CD8-positive, alpha-beta T cell (primary cell): ENCODE measurements at regions of chr3 and their contacts with region 1.

Region 1: DNA sequence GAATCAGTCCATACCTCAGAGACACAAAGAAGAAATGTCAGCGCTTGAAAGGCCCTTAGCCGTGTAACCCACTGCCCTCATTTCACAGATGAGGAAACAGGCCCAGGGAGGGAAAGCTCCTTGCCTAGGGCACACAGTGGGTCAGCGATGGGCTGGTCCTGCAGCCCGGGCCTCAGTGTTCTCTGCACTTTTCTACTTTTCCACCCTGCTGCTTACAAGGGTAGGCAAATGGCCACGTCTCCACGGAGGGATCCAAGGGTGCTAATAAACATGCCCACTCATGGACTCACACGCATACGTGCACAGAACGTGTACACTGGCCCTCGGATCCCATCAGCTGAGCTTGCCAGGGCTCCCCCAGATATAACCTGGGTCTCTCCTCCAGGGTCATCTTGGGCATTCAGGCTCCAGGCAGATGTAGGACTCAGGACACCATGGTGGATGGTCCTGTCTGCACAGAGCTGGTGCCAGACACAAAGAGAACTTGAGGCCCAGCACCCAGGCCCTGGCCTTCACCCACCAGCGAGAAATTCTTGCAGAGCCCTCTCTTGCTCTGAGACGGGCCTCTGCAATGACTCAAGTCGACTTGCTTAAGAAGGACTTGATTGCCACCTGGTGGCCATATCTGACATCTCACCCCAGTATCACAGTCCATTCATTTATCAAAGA is 34.5 kb upstream of the VPS8 start:
- DNase-seq: peak; percentile 63 to 91 (median 84)
- ATAC-seq: peak; percentile 98
- H3K4me3 ChIP-seq: no peak overlapping the region
- H3K4me3 Mint-ChIP-seq: no peak overlapping the region
- H3K27ac ChIP-seq: no peak overlapping the region
- H3K27ac Mint-ChIP-seq: no peak overlapping the region
- H3K4me1 ChIP-seq: no peaks in the 10 kb centered on the region
- H3K4me1 Mint-ChIP-seq: no peaks in the 10 kb centered on the region
- H3K27me3 ChIP-seq: peaks cover 0 to 2% of the 10 kb centered on the region in 2 experiments
- H3K27me3 Mint-ChIP-seq: peaks cover 22% of the 10 kb centered on the region
- CTCF ChIP-seq: peak; percentile 94

Region 2: GRCh38 chr3:184371570-184372018 is 405.9 kb before region 1 on chr3:
- CTCF ChIA-PET with region 1: interaction called, 9 read pairs
- POLR2A ChIA-PET with region 1: no interaction called
- intact Hi-C with region 1: loop called in 1 of 2 experiments (anchors 2 kb)
- DNase-seq: peak; percentile 29 to 74 (median 54)
- ATAC-seq: peak; percentile 99
- H3K4me3 ChIP-seq: no peak overlapping the region
- H3K4me3 Mint-ChIP-seq: no peak overlapping the region
- H3K27ac ChIP-seq: no peak overlapping the region
- H3K27ac Mint-ChIP-seq: no peak overlapping the region
- H3K4me1 ChIP-seq: no peaks in the 10 kb centered on the region
- H3K4me1 Mint-ChIP-seq: peaks cover 4% of the 10 kb centered on the region
- H3K27me3 ChIP-seq: no peaks in the 10 kb centered on the region
- H3K27me3 Mint-ChIP-seq: peaks cover 2% of the 10 kb centered on the region
- CTCF ChIP-seq: peak; percentile 74

Region 3: GRCh38 chr3:184417619-184418327 is 359.7 kb before region 1 on chr3:
- CTCF ChIA-PET with region 1: interaction called, 3 read pairs
- POLR2A ChIA-PET with region 1: no interaction called
- intact Hi-C with region 1: loop called in 1 of 2 experiments (anchors 1 kb)
- DNase-seq: peak; percentile 31 to 80 (median 72)
- ATAC-seq: peak; percentile 97
- H3K4me3 ChIP-seq: no peak overlapping the region
- H3K4me3 Mint-ChIP-seq: no peak overlapping the region
- H3K27ac ChIP-seq: no peak overlapping the region
- H3K27ac Mint-ChIP-seq: no peak overlapping the region
- H3K4me1 ChIP-seq: no peaks in the 10 kb centered on the region
- H3K4me1 Mint-ChIP-seq: no peaks in the 10 kb centered on the region
- H3K27me3 ChIP-seq: no peaks in the 10 kb centered on the region
- H3K27me3 Mint-ChIP-seq: peaks cover 1% of the 10 kb centered on the region
- CTCF ChIP-seq: peak; percentile 68

Region 4: GRCh38 chr3:184549793-184550577 is 227.5 kb before region 1 on chr3:
- CTCF ChIA-PET with region 1: interaction called, 10 read pairs
- POLR2A ChIA-PET with region 1: no interaction called
- intact Hi-C with region 1: no loop called
- DNase-seq: no peak
- ATAC-seq: no peak
- H3K4me3 ChIP-seq: no peak overlapping the region
- H3K4me3 Mint-ChIP-seq: no peak overlapping the region
- H3K27ac ChIP-seq: no peak overlapping the region
- H3K27ac Mint-ChIP-seq: no peak overlapping the region
- H3K4me1 ChIP-seq: peaks cover 17% of the 10 kb centered on the region
- H3K4me1 Mint-ChIP-seq: peaks cover 11% of the 10 kb centered on the region
- H3K27me3 ChIP-seq: peaks cover 0 to 2% of the 10 kb centered on the region in 2 experiments
- H3K27me3 Mint-ChIP-seq: peaks cover 19% of the 10 kb centered on the region
- CTCF ChIP-seq: no peak

Region 5: GRCh38 chr3:184568924-184569829 is 208.3 kb before region 1 on chr3:
- CTCF ChIA-PET with region 1: interaction called, 12 read pairs
- POLR2A ChIA-PET with region 1: no interaction called
- intact Hi-C with region 1: no loop called
- DNase-seq: peak in 2 of 9 experiments; percentile 18 to 24
- ATAC-seq: peak; percentile 38
- H3K4me3 ChIP-seq: peak overlapping the region in 1 of 2 experiments; percentile 37
- H3K4me3 Mint-ChIP-seq: peak overlapping the region; percentile 42
- H3K27ac ChIP-seq: no peak overlapping the region
- H3K27ac Mint-ChIP-seq: no peak overlapping the region
- H3K4me1 ChIP-seq: peaks cover 5% of the 10 kb centered on the region
- H3K4me1 Mint-ChIP-seq: peaks cover 7% of the 10 kb centered on the region
- H3K27me3 ChIP-seq: peaks cover 6 to 19% of the 10 kb centered on the region in 2 experiments
- H3K27me3 Mint-ChIP-seq: peaks cover 38% of the 10 kb centered on the region
- CTCF ChIP-seq: no peak

Region 6: DNA sequence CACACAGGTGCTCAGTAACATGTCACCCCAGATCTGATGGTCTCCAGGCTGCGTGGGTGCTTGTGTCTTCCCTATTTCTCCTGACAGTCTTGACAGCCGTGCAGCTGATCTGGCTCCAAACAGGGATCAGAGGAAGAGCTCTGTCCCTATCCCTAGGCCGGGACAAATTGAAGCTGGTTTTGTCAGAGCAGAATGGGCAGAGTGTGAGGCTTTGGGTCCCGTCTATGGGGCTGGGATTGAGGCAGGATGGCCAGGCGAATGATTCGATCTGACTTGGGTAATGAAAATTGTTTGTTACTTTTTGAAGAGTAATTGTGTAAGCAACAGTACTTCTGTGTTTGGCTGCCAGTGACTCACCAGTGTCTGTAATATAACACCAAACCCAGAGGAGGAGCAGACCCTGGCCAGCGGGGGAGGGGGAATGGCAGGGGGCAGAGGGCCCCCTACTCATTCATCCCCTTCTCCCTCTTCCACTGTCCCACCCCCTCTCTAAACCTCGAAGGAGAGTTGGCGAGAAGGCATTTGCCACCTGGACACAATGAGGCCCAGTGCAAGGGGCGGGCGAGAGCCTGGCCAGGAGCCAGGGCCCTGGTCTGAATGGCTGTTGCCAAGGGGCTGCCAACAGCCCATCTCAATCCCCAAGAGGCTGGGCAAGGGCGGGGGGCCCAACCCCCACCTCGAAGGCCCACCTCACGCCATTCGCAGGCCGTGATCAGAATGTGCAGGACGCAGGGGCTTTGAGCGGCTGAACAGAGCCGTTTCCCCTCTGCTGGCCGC is 60.7 kb before region 1 on chr3:
- CTCF ChIA-PET with region 1: no interaction called
- POLR2A ChIA-PET with region 1: no interaction called
- intact Hi-C with region 1: no loop called
- DNase-seq: peak in 1 of 9 experiments; percentile 39
- ATAC-seq: no peak
- H3K4me3 ChIP-seq: no peak overlapping the region
- H3K4me3 Mint-ChIP-seq: no peak overlapping the region
- H3K27ac ChIP-seq: no peak overlapping the region
- H3K27ac Mint-ChIP-seq: no peak overlapping the region
- H3K4me1 ChIP-seq: no peaks in the 10 kb centered on the region
- H3K4me1 Mint-ChIP-seq: peaks cover 10% of the 10 kb centered on the region
- H3K27me3 ChIP-seq: no peaks in the 10 kb centered on the region
- H3K27me3 Mint-ChIP-seq: no peaks in the 10 kb centered on the region
- CTCF ChIP-seq: no peak

Region 7: GRCh38 chr3:184727357-184728009 is 50.0 kb before region 1 on chr3:
- CTCF ChIA-PET with region 1: interaction called, 19 read pairs
- POLR2A ChIA-PET with region 1: no interaction called
- intact Hi-C with region 1: no loop called
- DNase-seq: peak in 7 of 9 experiments; percentile 11 to 76 (median 52)
- ATAC-seq: peak; percentile 57
- H3K4me3 ChIP-seq: no peak overlapping the region
- H3K4me3 Mint-ChIP-seq: no peak overlapping the region
- H3K27ac ChIP-seq: no peak overlapping the region
- H3K27ac Mint-ChIP-seq: no peak overlapping the region
- H3K4me1 ChIP-seq: no peaks in the 10 kb centered on the region
- H3K4me1 Mint-ChIP-seq: no peaks in the 10 kb centered on the region
- H3K27me3 ChIP-seq: no peaks in the 10 kb centered on the region
- H3K27me3 Mint-ChIP-seq: peaks cover 14% of the 10 kb centered on the region
- CTCF ChIP-seq: peak; percentile 41

Region 8: GRCh38 chr3:184800349-184800930 is 23.0 kb after region 1 on chr3:
- CTCF ChIA-PET with region 1: interaction called, 14 read pairs
- POLR2A ChIA-PET with region 1: no interaction called
- intact Hi-C with region 1: no loop called
- DNase-seq: no peak
- ATAC-seq: no peak
- H3K4me3 ChIP-seq: no peak overlapping the region
- H3K4me3 Mint-ChIP-seq: no peak overlapping the region
- H3K27ac ChIP-seq: no peak overlapping the region
- H3K27ac Mint-ChIP-seq: no peak overlapping the region
- H3K4me1 ChIP-seq: no peaks in the 10 kb centered on the region
- H3K4me1 Mint-ChIP-seq: peaks cover 4% of the 10 kb centered on the region
- H3K27me3 ChIP-seq: peaks cover 3% of the 10 kb centered on the region in 2 experiments
- H3K27me3 Mint-ChIP-seq: peaks cover 24% of the 10 kb centered on the region
- CTCF ChIP-seq: no peak

Region 9: GRCh38 chr3:186476541-186476940 is 1699.1 kb after region 1 on chr3:
- CTCF ChIA-PET with region 1: no interaction called
- POLR2A ChIA-PET with region 1: no interaction called
- intact Hi-C with region 1: no loop called
- DNase-seq: no peak
- ATAC-seq: no peak
- H3K4me3 ChIP-seq: no peak overlapping the region
- H3K4me3 Mint-ChIP-seq: no peak overlapping the region
- H3K27ac ChIP-seq: no peak overlapping the region
- H3K27ac Mint-ChIP-seq: no peak overlapping the region
- H3K4me1 ChIP-seq: no peaks in the 10 kb centered on the region
- H3K4me1 Mint-ChIP-seq: peaks cover 4% of the 10 kb centered on the region
- H3K27me3 ChIP-seq: no peaks in the 10 kb centered on the region
- H3K27me3 Mint-ChIP-seq: peaks cover 3% of the 10 kb centered on the region
- CTCF ChIP-seq: no peak